Right ventricle myocardium inferior (tissue), 1 donor: ENCODE measurements at regions of chr10 and their contacts with region 1.

Region 1: DNA sequence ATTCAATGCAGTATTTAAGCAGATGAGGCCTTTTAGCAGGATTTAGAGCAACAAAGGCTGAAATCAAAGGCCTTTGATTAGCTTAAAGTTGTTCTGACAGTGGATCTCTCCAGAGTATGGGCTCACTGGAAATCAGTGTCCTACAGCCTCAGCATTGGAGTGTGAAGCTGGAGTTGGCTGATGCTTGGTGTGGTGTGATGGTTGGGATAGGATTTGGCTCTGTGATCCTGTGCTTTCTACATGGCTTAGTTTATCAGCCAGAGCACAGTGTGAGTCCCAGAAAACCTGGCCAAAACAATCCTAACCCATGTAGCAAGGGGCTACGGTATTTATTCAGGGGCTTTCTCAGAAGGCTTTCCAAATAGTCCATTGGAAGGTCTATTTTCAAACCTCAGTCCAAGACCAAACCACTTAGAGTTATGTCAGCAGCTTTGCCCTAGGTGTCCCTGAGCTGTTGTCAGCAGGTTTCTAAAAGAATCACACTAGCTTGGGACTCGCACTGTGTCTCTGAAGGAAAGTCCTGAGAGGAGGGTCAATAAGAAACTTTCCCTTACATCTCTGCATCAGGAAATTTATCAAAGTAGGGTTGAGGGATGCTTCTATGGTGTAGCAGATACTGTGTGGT is 65.4 kb upstream of the ANKRD1 start:
- DNase-seq: no peak
- ATAC-seq: peak; percentile 89

Region 2: GRCh38 chr10:90920986-90921666 is 65.1 kb before region 1 on chr10 and contains the start of gene ANKRD1:
- intact Hi-C with region 1: loop called (anchors 2 kb)
- DNase-seq: peak; percentile 65
- ATAC-seq: peak; percentile 94
- total RNA-seq, gene ANKRD1: 2,249 TPM

Region 3: GRCh38 chr10:91190876-91191583 is 204.8 kb after region 1 on chr10:
- intact Hi-C with region 1: no loop called
- DNase-seq: no peak
- ATAC-seq: no peak

Region 4: GRCh38 chr10:91201213-91201996 is 215.2 kb after region 1 on chr10:
- intact Hi-C with region 1: no loop called
- DNase-seq: no peak
- ATAC-seq: no peak